ENCODE measurements at regions of chr17 and their contacts with region 1.

Region 1: DNA sequence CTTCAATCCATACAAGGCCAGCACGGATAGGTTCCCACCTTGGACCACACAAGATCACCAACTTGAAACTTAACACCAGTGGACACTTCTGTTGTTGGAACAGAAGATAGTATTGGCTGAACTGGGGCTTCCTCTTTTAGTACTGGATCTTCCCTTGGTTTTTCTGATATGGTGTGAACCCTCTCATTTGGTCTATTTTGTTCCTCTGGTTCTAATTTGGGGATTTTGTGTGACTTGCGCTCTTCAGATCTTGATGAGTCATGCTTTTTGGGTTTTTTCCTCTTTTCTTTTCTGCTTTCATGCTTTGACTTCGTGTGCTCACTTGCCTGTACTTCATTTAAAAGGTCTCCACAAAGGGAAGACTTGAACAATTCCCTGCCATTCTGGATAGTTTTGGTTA is 39.0 kb downstream of the SOST start:
- DNase-seq: no peak
- ATAC-seq: no peak
- H3K4me3 ChIP-seq: no peak overlapping the region
- H3K27ac ChIP-seq: no peak overlapping the region
- H3K4me1 ChIP-seq: peaks cover 0 to 34% of the 10 kb centered on the region in 2 experiments; a peak in 2 of 4 replicates
- H3K27me3 ChIP-seq: no peaks in the 10 kb centered on the region
- CTCF ChIP-seq: no peak
- POLR2A ChIP-seq: no peak
- RAD21 ChIP-seq: no peak

Region 2: GRCh38 chr17:43702636-43703035 is 16.9 kb before region 1 on chr17:
- CTCF ChIA-PET with region 1: no interaction called
- POLR2A ChIA-PET with region 1: no interaction called
- RAD21 ChIA-PET with region 1: no interaction called
- intact Hi-C with region 1: loop called (anchors 2 kb)
- DNase-seq: no peak
- ATAC-seq: peak; percentile 86
- H3K4me3 ChIP-seq: no peak overlapping the region
- H3K27ac ChIP-seq: no peak overlapping the region
- H3K4me1 ChIP-seq: peaks cover 11 to 19% of the 10 kb centered on the region in 2 experiments
- H3K27me3 ChIP-seq: no peaks in the 10 kb centered on the region
- CTCF ChIP-seq: no peak
- POLR2A ChIP-seq: no peak
- RAD21 ChIP-seq: no peak

Region 3: DNA sequence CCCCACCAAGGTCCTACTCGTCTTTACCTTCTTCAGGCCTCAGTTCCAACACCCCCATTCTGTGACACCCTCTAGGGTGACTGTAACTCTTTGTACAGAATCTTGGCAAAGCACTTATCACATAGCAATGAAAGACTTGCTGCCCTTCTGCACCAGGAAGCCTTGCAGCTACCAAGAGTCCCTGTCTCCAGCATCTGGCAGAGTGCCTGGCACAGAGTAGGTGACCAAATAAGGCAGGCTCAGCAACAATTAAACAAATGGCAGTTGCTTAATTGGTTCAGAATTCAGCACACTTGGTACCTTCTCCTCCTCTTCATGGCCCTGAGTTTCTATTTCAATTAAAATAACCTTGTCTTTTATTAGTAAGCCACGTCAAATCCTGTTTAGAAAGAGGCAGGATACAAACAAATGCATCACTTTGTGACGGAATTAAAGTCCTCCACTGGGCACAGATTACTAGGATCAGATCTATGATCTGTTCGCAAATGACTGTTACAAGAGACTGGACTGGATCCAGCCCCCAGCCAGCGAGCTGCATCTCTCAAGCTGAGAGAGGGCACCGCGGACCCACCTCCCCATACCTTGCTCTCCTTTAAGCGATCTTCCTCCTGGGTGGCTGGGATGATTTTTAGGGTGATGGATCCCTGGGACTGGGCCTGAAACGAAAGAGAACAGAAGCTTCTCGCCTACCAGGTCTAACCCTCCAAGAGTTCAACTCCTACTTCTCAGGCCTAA is 103.9 kb after region 1 on chr17:
- CTCF ChIA-PET with region 1: no interaction called
- POLR2A ChIA-PET with region 1: no interaction called
- RAD21 ChIA-PET with region 1: no interaction called
- intact Hi-C with region 1: no loop called
- DNase-seq: no peak
- ATAC-seq: no peak
- H3K4me3 ChIP-seq: no peak overlapping the region
- H3K27ac ChIP-seq: no peak overlapping the region
- H3K4me1 ChIP-seq: no peaks in the 10 kb centered on the region
- H3K27me3 ChIP-seq: no peaks in the 10 kb centered on the region
- CTCF ChIP-seq: no peak
- POLR2A ChIP-seq: no peak
- RAD21 ChIP-seq: no peak

Measured in HCT116 (cell line).